ENCODE measurements at regions of chr12 and their contacts with region 1.

Region 1: GRCh38 chr12:66947119-66947518 is 268.2 kb upstream of the GRIP1 start:
- DNase-seq: peak; percentile 19
- H3K4me3 Mint-ChIP-seq: no peak overlapping the region
- H3K27ac Mint-ChIP-seq: no peak overlapping the region
- H3K4me1 Mint-ChIP-seq: peaks cover 10% of the 10 kb centered on the region
- H3K27me3 Mint-ChIP-seq: peaks cover 5% of the 10 kb centered on the region

Region 2: GRCh38 chr12:66929121-66929520 is 18.0 kb before region 1 on chr12:
- CTCF ChIA-PET with region 1: no interaction called
- POLR2A ChIA-PET with region 1: interaction called, 4 read pairs
- intact Hi-C with region 1: loop called (anchors 1 kb)
- DNase-seq: peak; percentile 62
- H3K4me3 Mint-ChIP-seq: no peak overlapping the region
- H3K27ac Mint-ChIP-seq: no peak overlapping the region
- H3K4me1 Mint-ChIP-seq: peaks cover 15% of the 10 kb centered on the region
- H3K27me3 Mint-ChIP-seq: peaks cover 8% of the 10 kb centered on the region

Region 3: GRCh38 chr12:66964629-66965028 is 17.5 kb after region 1 on chr12:
- CTCF ChIA-PET with region 1: interaction called, 3 read pairs
- POLR2A ChIA-PET with region 1: no interaction called
- intact Hi-C with region 1: loop called (anchors 1 kb)
- DNase-seq: peak; percentile 54
- H3K4me3 Mint-ChIP-seq: no peak overlapping the region
- H3K27ac Mint-ChIP-seq: no peak overlapping the region
- H3K4me1 Mint-ChIP-seq: peaks cover 27% of the 10 kb centered on the region
- H3K27me3 Mint-ChIP-seq: no peaks in the 10 kb centered on the region

Region 4: DNA sequence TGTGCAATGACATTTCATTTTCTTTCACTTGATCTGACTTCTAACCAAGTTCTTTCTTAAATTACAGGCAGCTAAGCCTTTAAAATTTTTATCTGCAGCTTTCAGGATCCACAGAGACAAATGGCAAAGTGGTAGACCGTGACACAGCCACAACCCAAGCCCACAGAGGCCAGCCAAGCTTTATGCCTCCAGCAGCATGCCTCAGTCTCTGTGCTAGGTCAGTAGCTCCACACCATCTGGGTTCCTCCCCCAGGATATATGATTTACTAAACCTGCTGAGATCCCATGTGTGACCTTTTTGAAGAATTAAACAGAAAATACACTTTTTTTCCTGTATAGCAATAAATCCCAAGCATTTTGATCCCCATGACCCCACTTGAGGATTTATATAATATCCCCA is 31.7 kb after region 1 on chr12:
- CTCF ChIA-PET with region 1: no interaction called
- POLR2A ChIA-PET with region 1: no interaction called
- intact Hi-C with region 1: loop called (anchors 2 kb)
- DNase-seq: peak; percentile 16
- H3K4me3 Mint-ChIP-seq: no peak overlapping the region
- H3K27ac Mint-ChIP-seq: no peak overlapping the region
- H3K4me1 Mint-ChIP-seq: peaks cover 9% of the 10 kb centered on the region
- H3K27me3 Mint-ChIP-seq: peaks cover 23% of the 10 kb centered on the region